ENCODE measurements at regions of chr4 and their contacts with region 1.

Region 1: DNA sequence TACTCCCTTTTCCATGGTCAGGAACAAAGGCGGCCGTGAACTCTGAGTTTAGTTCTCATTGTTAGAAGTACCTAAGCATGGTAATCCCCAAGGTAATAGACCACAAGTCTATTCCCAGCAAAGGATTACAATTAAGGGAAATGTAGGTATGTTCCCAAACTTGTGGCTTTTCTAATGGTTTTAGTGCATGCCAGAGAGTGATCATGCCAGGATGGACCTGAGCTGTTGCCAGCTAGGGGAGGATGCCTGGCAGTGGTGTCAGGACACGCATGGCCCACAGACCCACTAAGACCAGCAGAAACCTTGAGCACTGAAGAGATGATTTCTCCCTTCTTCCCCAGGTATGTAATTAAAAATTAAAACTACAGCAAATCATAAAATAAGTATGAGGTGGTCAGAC is 60.8 kb downstream of the COQ2 start:
- DNase-seq: no peak
- ATAC-seq: no peak
- H3K4me3 Mint-ChIP-seq: peak overlapping the region; percentile 25
- H3K27ac Mint-ChIP-seq: peak overlapping the region; percentile 94
- H3K4me1 Mint-ChIP-seq: peaks cover 65% of the 10 kb centered on the region
- H3K27me3 Mint-ChIP-seq: no peaks in the 10 kb centered on the region

Region 2: DNA sequence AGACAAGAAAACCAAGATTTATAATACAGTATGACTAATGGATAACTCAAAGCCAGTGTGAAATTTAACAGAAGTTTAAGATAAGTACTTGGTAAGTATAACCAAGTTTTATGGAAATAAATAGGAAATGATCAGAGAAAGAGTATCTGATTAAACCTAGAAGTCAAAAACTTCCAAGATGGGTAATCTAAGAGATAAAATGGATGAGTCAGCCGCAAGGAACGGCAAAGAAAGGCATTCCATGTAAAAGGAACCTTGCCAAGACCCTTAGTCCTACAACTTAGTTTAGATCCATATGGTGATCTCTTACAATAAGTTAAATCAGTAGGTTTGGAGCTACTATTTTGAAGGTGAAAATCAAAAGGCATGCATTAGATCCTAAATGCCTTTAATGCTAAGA is 248.0 kb before region 1 on chr4:
- POLR2A ChIA-PET with region 1: no interaction called
- DNase-seq: no peak
- ATAC-seq: no peak
- H3K4me3 Mint-ChIP-seq: no peak overlapping the region
- H3K27ac Mint-ChIP-seq: no peak overlapping the region
- H3K4me1 Mint-ChIP-seq: peaks cover 2% of the 10 kb centered on the region
- H3K27me3 Mint-ChIP-seq: no peaks in the 10 kb centered on the region

Region 3: GRCh38 chr4:83153417-83153816 is 70.4 kb before region 1 on chr4:
- POLR2A ChIA-PET with region 1: no interaction called
- DNase-seq: no peak
- ATAC-seq: no peak
- H3K4me3 Mint-ChIP-seq: no peak overlapping the region
- H3K27ac Mint-ChIP-seq: no peak overlapping the region
- H3K4me1 Mint-ChIP-seq: peaks cover 22% of the 10 kb centered on the region
- H3K27me3 Mint-ChIP-seq: no peaks in the 10 kb centered on the region

Region 4: DNA sequence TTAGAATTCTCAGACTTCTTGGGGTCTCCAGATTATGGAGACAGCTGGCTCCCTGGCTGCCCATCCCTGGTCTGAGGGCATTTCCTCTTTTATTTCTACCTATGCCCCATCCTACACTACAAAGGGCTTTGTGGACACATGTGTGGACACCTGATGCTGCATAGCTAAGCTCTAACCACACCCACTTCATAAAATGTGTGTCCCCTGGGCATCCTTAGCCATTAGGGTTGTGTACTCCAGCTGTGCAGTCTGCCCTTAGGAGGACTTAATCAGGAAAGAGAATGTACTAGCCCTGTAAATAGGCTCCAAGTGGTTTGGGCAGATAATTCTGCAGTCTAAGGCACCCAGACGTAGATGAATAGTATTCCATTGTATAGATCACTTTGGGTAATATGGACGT is 13.8 kb after region 1 on chr4:
- POLR2A ChIA-PET with region 1: interaction called, 28 read pairs
- DNase-seq: no peak
- ATAC-seq: no peak
- H3K4me3 Mint-ChIP-seq: no peak overlapping the region
- H3K27ac Mint-ChIP-seq: no peak overlapping the region
- H3K4me1 Mint-ChIP-seq: peaks cover 64% of the 10 kb centered on the region
- H3K27me3 Mint-ChIP-seq: no peaks in the 10 kb centered on the region

Measured in activated naive CD8-positive, alpha-beta T cell treated with anti-CD3 and anti-CD28 coated beads, Interleukin-2, amount 10 ng/mL, durations not matched to agents 7 days and 5 days (primary cell).